ENCODE measurements at regions of chr1 and their contacts with region 1.

Region 1: DNA sequence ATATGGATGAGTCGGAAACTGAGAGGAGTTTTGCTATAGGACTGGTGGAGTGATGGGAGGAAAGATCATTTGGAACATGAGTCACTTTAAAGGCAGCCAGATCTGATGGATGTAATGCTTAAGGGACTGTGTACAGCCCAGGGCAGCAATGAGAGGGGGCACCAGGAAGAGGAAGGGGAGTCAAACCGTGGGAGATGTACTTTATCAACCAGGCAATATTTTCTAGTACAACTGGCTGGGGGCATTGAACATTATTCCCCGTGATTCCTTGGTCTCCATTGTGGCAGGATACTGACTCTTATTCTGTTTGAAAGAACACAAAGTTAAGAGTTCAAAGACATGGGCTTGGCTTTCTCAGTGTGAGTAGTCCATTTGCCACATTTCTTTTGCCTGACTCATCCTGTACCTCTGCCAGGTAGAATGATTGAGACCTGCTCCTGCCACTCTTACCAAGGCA is 268.2 kb upstream of the NR5A2 start:
- DNase-seq: no peak
- H3K4me3 ChIP-seq: no peak overlapping the region
- H3K27ac ChIP-seq: no peak overlapping the region
- H3K4me1 ChIP-seq: no peaks in the 10 kb centered on the region
- H3K27me3 ChIP-seq: no peaks in the 10 kb centered on the region
- CTCF ChIP-seq: no peak
- POLR2A ChIP-seq: no peak

Region 2: DNA sequence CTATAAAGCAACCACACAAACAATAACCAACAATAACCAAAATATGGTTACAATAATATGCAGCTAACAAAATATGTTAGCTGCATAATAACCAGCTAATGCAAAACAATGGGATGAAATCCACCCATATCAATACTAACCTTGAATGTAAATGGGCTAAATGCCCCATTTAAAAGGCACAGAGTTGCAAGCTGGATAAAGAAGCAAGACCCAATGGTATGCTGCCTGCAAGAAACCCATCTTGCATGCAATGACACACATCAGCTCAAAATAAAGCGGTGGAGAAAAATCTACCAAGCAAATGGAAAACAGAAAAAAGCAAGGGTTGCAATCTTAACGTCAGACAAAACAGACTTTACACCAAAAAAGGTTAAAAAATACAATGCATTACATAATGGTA is 48.3 kb before region 1 on chr1:
- intact Hi-C with region 1: no loop called
- DNase-seq: no peak
- H3K4me3 ChIP-seq: no peak overlapping the region
- H3K27ac ChIP-seq: no peak overlapping the region
- H3K4me1 ChIP-seq: no peaks in the 10 kb centered on the region
- H3K27me3 ChIP-seq: no peaks in the 10 kb centered on the region
- CTCF ChIP-seq: no peak
- POLR2A ChIP-seq: no peak

Region 3: DNA sequence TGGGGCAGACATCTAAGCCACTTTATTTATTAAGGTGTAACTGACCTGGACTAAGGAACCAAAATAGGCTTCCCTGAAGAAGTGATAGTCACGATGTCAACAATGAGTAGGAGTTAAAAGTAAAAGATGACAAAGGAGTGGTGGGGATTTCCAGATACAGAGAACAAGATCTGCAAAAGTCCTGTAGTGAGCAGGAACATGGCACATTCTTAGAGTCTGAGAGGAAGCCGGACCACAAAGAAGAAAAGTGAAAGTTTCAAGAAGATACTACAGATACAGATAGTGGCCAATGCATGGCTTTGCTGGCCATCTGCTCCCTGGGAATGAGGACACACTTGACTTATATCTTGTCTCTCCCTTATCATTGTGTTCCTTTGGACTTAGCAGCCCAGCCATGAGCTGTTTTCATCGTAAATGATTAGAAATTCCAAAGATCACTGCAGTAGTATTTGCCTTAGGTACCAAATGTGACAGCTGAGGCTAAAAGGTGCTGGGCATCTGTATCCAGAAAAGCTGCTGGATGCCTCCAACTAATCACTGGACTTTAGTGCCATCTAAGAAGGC is 34.2 kb before region 1 on chr1:
- intact Hi-C with region 1: loop called (anchors 2 kb)
- DNase-seq: no peak
- H3K4me3 ChIP-seq: no peak overlapping the region
- H3K27ac ChIP-seq: no peak overlapping the region
- H3K4me1 ChIP-seq: no peaks in the 10 kb centered on the region
- H3K27me3 ChIP-seq: no peaks in the 10 kb centered on the region
- CTCF ChIP-seq: no peak
- POLR2A ChIP-seq: no peak

Region 4: DNA sequence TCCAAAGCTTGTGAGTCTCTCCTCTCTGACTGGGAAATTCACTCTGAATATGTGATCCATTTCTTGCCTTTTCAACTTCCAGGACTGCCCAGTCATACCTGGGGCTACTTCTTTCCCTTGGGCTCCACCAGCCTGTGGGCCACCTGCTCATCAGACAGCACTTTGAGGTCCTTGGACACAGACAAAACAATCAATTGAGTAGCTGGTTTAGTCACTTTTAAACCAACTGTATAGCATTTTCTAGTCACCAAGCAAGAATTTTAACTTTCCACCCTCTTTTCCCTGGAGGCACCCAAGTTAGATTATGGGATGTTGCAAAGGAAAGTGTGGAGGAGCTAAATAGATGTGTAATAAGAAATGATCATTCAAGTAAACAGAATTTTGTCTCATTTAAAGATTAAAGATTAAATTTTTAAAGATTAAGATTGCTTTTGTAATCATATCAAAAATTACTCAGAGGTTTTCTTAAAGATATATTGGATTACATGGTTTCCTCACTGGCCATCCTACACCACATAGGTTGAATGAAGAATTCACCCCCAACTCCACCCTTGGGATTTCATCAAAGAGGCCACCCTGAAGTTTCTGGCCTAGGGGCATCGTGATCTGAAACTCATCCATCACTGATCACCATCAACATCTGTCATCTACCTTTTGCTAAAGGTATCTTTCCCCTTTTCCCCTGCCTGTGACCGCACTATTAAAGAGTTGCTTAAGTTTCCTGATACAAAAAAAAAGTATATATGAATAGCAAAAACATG is 49.0 kb after region 1 on chr1:
- intact Hi-C with region 1: no loop called
- DNase-seq: no peak
- H3K4me3 ChIP-seq: no peak overlapping the region
- H3K27ac ChIP-seq: no peak overlapping the region
- H3K4me1 ChIP-seq: no peaks in the 10 kb centered on the region
- H3K27me3 ChIP-seq: no peaks in the 10 kb centered on the region
- CTCF ChIP-seq: no peak
- POLR2A ChIP-seq: no peak

Region 5: DNA sequence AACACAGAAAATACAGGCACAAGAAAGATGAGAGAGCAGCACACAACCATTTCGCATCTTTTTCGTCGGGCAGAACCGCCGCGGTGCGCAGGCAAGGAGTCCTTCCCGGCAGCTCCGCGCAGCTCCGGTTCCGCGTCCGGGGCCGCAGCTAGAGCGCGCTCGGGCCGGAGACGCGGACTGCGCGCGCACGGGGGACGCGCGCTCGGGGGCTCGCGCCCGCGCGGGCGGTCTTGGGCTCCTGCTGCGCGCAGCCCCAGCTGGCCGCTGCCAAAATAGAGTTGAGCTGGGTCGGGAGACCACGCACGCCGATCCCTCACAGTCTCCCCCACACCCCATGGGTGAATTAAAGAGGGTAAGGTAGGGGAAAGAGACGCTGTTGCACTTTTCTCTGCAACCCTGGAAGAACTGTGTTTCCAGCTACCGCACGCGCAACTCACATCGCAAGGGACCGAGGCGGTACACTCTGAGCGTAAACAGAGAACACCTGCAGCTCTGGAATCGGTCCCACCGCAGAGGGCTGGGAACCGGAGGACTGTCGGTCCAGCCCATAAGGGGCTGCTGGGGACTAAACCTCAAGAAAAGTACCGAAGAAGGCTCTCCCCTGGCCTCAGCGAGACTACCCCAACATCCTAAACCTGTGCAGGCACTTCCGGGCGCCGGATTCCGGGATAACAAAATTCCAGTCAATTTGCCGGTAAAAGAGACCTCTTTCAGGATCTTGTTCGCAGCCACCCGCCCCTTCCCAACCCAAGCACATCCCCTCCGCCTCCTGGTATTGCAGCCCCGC is 269.9 kb after region 1 on chr1:
- intact Hi-C with region 1: no loop called
- DNase-seq: no peak
- H3K4me3 ChIP-seq: peak overlapping the region; percentile 4 to 36
- H3K27ac ChIP-seq: no peak overlapping the region
- H3K4me1 ChIP-seq: no peaks in the 10 kb centered on the region
- H3K27me3 ChIP-seq: no peaks in the 10 kb centered on the region
- CTCF ChIP-seq: no peak
- POLR2A ChIP-seq: peak in 1 of 2 donors; percentile 21